ENCODE measurements at regions of chr3 and their contacts with region 1.

Region 1: GRCh38 chr3:168952551-168952950 is 711.0 kb downstream of the MECOM start:
- DNase-seq: no peak
- H3K4me3 Mint-ChIP-seq: no peak overlapping the region
- H3K27ac Mint-ChIP-seq: peak overlapping the region; percentile 84
- H3K4me1 Mint-ChIP-seq: peaks cover 62% of the 10 kb centered on the region
- H3K27me3 Mint-ChIP-seq: no peaks in the 10 kb centered on the region
- CTCF ChIP-seq: no peak

Region 2: DNA sequence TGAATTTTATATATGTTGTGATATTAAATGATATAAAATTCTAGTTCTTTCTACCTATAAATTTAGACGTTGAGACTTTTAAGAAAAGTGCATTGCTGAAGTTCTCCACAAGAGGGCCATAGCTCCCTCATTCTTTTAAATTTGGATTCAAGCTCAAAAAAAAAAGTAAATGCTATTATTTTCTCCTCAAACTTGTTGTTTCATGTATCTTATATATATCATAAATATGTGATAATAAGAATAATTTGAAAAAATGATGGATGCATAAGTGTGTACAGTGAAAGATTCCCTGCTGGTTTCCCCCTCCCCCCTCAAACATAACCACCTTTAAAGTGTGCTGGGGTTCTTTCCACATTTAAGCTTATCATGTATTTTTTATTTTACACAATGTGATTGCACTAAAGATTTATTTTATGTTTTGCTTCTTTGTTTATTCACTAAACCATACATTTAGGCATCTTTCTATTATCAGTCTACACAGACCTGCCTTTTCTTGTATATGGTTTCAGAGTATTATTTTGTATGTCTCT is 87.5 kb before region 1 on chr3:
- CTCF ChIA-PET with region 1: interaction called, 28 read pairs
- intact Hi-C with region 1: loop called (anchors 1 kb)
- DNase-seq: peak; percentile 34
- H3K4me3 Mint-ChIP-seq: peak overlapping the region; percentile 49
- H3K27ac Mint-ChIP-seq: no peak overlapping the region
- H3K4me1 Mint-ChIP-seq: peaks cover 90% of the 10 kb centered on the region
- H3K27me3 Mint-ChIP-seq: no peaks in the 10 kb centered on the region
- CTCF ChIP-seq: peak; percentile 89

Region 3: DNA sequence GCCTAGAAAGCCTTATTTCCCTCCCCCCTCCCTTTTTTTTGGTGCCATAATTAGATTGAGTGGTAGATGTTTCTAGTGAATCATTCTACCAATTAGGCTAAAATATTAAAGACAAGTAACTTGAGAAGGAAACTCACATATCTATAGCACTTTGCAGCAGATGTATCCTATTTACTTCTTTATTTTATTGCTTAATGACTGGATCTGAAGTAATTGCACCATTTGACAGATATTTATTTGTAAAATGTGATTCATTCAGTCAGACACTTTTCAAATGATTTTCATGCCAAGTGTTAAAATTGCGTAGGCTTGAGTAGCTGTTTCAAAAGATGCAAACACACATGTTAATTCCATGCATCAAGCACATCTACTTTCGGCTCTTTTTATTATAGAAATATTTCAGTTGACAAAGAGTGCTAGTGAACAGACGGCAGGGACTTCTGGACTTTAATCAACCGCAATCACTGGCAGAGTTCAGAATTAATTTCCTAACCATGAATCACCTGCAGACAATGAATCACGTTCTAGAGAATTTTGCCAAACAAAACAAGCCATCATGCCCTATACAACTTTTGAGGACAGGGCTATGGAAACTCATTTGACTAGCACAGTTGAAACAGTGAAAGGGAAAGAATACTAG is 74.1 kb after region 1 on chr3:
- CTCF ChIA-PET with region 1: interaction called, 7 read pairs
- intact Hi-C with region 1: loop called (anchors 2 kb)
- DNase-seq: peak; percentile 60
- H3K4me3 Mint-ChIP-seq: peak overlapping the region; percentile 27
- H3K27ac Mint-ChIP-seq: peak overlapping the region; percentile 63
- H3K4me1 Mint-ChIP-seq: peaks cover 13% of the 10 kb centered on the region
- H3K27me3 Mint-ChIP-seq: no peaks in the 10 kb centered on the region
- CTCF ChIP-seq: no peak

Region 4: GRCh38 chr3:169082076-169082475 is 129.5 kb after region 1 on chr3:
- CTCF ChIA-PET with region 1: no interaction called
- intact Hi-C with region 1: no loop called
- DNase-seq: no peak
- H3K4me3 Mint-ChIP-seq: no peak overlapping the region
- H3K27ac Mint-ChIP-seq: no peak overlapping the region
- H3K4me1 Mint-ChIP-seq: peaks cover 10% of the 10 kb centered on the region
- H3K27me3 Mint-ChIP-seq: no peaks in the 10 kb centered on the region
- CTCF ChIP-seq: no peak

Region 5: GRCh38 chr3:169104972-169105970 is 152.7 kb after region 1 on chr3:
- CTCF ChIA-PET with region 1: no interaction called
- intact Hi-C with region 1: loop called (anchors 5 kb)
- DNase-seq: peak; percentile 16
- H3K4me3 Mint-ChIP-seq: peak overlapping the region; percentile 22
- H3K27ac Mint-ChIP-seq: peak overlapping the region; percentile 53
- H3K4me1 Mint-ChIP-seq: peaks cover 51% of the 10 kb centered on the region
- H3K27me3 Mint-ChIP-seq: no peaks in the 10 kb centered on the region
- CTCF ChIP-seq: no peak

Region 6: GRCh38 chr3:169295126-169295525 is 342.6 kb after region 1 on chr3:
- CTCF ChIA-PET with region 1: interaction called, 3 read pairs
- intact Hi-C with region 1: loop called (anchors 5 kb)
- DNase-seq: peak; percentile 51
- H3K4me3 Mint-ChIP-seq: no peak overlapping the region
- H3K27ac Mint-ChIP-seq: peak overlapping the region; percentile 84
- H3K4me1 Mint-ChIP-seq: peaks cover 72% of the 10 kb centered on the region
- H3K27me3 Mint-ChIP-seq: no peaks in the 10 kb centered on the region
- CTCF ChIP-seq: peak; percentile 72

Region 7: DNA sequence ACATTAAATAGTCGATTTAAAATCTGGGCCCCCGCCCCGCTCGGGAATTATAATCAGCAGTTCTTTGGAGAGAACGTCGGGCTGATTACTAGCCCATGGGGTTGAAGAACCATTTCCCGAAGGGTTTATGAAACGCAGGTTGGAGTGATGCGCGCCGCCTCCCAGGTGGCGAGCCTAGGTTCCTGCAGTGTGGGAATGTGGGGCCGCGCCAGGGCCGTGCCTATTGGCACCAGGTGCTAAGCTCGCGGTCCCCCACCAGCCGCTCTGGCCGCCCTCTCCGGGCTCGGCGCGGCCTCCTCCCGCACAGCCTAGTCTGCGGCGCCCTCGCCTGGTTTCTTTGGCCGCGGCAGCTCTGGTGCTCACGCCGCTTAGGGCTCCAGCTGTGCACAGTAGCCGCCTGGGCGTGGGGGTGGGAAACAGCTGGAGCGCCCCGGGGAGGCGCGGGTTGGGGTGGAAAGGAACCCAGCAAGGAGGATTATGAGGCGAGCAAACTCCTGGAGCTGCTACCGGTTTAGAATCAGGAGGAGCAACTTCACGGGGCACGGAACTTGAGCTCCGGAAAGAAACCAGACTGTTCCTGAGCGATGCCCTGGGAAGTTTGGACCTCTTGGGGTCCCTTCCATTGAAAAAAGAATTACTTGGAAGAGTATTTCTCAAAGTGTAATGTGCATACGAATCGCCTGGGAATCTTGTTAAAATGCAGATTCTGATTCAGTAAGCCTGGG is 716.6 kb after region 1 on chr3:
- CTCF ChIA-PET with region 1: interaction called, 22 read pairs
- intact Hi-C with region 1: loop called (anchors 2 kb)
- DNase-seq: peak; percentile 97
- H3K4me3 Mint-ChIP-seq: peak overlapping the region; percentile 79
- H3K27ac Mint-ChIP-seq: peak overlapping the region; percentile 60
- H3K4me1 Mint-ChIP-seq: peaks cover 30% of the 10 kb centered on the region
- H3K27me3 Mint-ChIP-seq: no peaks in the 10 kb centered on the region
- CTCF ChIP-seq: peak; percentile 95

Measured in Calu3 (cell line).